Heart right ventricle (tissue), 16 donors: ENCODE measurements at regions of chr10 and their contacts with region 1.

Region 1: DNA sequence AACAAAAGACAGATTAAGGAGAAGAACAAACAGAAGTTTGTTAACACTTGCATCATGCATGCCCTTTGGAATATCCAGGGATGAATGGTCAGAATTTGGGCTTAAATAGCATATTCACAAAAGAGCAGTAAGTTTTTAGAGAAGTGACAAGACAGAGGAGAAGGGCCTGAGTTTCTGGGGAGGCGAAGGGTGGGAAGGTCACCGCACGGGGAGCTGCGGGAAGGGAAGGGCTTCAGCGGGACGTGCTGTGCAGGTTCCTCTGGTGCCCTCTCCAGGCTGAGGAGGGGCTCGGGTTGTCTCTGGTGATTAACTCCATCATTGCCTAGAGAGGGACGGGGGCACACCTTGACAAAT is 10.4 kb upstream of the ZNF22 start:
- DNase-seq: peak in 1 of 2 donors; percentile 42
- ATAC-seq: peak in 7 of 8 donors; percentile 33 to 66 (median 54)
- H3K4me3 ChIP-seq: no peak overlapping the region
- H3K27ac ChIP-seq: peak overlapping the region; percentile 8 to 99 (median 61)
- H3K4me1 ChIP-seq: peaks cover 30 to 86% (median 68%) of the 10 kb centered on the region in 9 donors
- H3K27me3 ChIP-seq: no peaks in the 10 kb centered on the region
- CTCF ChIP-seq: peak in 8 of 9 donors; percentile 36 to 65 (median 44)

Region 2: DNA sequence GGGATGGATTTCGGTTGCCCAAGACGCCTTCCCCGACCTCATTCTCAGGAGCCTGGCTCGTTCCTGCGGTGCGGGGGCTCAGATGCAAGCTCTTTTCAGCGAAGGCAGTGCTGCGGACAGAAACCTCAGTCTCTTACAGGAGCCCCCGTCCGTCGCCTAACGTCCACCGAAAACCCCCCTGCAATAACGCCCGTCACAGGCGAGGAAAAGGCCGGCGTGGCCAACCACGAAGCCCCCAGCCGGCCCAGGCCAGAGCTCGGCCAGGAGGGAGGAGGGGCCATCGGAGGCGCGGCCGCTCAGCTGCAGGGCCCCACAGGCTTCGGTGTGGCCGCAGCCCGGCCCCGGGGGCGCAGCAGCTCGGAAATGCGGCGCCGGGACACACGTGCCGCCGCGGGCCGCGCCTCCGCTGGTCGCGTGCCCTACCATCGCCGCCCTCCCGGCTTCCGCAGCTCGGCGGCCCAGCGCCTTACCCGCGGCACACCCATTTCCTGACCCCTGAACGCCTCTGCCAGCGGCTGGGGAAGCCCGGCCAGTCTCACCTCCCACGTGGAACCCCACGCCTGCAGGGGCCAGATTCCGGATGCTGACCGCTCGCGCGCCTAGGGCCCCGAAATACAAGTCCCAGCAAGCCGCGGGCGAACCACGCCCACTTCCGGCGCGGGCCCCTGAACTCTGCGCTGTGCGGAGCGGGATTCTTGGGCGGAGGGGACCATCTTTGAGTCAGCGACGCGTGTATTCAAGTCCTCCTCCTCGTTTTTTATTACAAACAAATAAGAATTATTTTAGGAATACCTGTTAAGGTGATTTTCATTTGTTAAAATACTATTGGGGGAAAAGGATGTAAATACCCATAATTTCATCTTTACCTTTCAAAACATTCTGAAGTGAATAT is 1416.0 kb before region 1 on chr10 and contains the start of gene ZNF239:
- intact Hi-C with region 1: no loop called
- DNase-seq: peak; percentile 91 to 92
- ATAC-seq: peak; percentile 95 to 99 (median 98)
- H3K4me3 ChIP-seq: peak within 1 kb of the TSS; percentile 7 to 74 (median 63)
- H3K27ac ChIP-seq: peak within 1 kb of the TSS in 9 of 10 donors; percentile 52 to 83 (median 60)
- H3K4me1 ChIP-seq: peaks cover 0 to 20% (median 14%) of the 10 kb centered on the region in 9 donors
- H3K27me3 ChIP-seq: no peaks in the 10 kb centered on the region
- CTCF ChIP-seq: peak in 1 of 9 donors; percentile 15
- total RNA-seq, gene ZNF239: 1.1 to 2.5 (median 1.6) TPM

Region 3: GRCh38 chr10:44878706-44879530 is 111.4 kb before region 1 on chr10:
- intact Hi-C with region 1: loop called in 1 of 10 experiments (anchors 10 kb)
- DNase-seq: peak; percentile 86 to 91
- ATAC-seq: peak; percentile 90 to 97 (median 95)
- H3K4me3 ChIP-seq: peak overlapping the region in 9 of 10 donors; percentile 35 to 61 (median 52)
- H3K27ac ChIP-seq: peak overlapping the region in 9 of 10 donors; percentile 11 to 72 (median 60)
- H3K4me1 ChIP-seq: peaks cover 0 to 34% (median 16%) of the 10 kb centered on the region in 9 donors
- H3K27me3 ChIP-seq: peaks cover 0 to 6% (median 0%) of the 10 kb centered on the region in 7 donors
- CTCF ChIP-seq: peak in 6 of 9 donors; percentile 10 to 39 (median 22)

Region 4: DNA sequence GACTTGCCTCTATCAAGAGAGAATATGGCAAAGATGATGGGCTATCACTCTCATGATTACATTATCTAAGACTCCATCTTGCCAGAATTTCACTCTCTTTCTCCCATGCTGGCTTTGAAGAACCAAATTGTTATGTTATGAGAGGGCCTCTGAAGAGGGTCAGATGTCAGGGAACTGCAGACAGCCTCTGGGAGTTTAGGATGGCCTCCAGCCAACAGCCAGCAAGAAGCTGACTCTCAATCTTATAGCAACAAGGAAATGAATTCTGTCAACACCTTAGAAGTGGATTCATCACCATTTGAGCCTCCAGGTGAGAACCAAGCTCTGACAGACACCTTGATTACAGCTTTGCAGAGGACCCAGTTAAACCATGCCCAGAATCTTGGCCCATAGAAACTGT is 44.0 kb after region 1 on chr10:
- intact Hi-C with region 1: no loop called
- DNase-seq: no peak
- ATAC-seq: no peak
- H3K4me3 ChIP-seq: no peak overlapping the region
- H3K27ac ChIP-seq: no peak overlapping the region
- H3K4me1 ChIP-seq: no peaks in the 10 kb centered on the region
- H3K27me3 ChIP-seq: no peaks in the 10 kb centered on the region
- CTCF ChIP-seq: no peak

Region 5: GRCh38 chr10:45058580-45058979 is 68.3 kb after region 1 on chr10:
- intact Hi-C with region 1: no loop called
- DNase-seq: no peak
- ATAC-seq: no peak
- H3K4me3 ChIP-seq: no peak overlapping the region
- H3K27ac ChIP-seq: no peak overlapping the region
- H3K4me1 ChIP-seq: peaks cover 0 to 15% (median 0%) of the 10 kb centered on the region in 9 donors
- H3K27me3 ChIP-seq: peaks cover 0 to 4% (median 0%) of the 10 kb centered on the region in 7 donors
- CTCF ChIP-seq: no peak

Region 6: DNA sequence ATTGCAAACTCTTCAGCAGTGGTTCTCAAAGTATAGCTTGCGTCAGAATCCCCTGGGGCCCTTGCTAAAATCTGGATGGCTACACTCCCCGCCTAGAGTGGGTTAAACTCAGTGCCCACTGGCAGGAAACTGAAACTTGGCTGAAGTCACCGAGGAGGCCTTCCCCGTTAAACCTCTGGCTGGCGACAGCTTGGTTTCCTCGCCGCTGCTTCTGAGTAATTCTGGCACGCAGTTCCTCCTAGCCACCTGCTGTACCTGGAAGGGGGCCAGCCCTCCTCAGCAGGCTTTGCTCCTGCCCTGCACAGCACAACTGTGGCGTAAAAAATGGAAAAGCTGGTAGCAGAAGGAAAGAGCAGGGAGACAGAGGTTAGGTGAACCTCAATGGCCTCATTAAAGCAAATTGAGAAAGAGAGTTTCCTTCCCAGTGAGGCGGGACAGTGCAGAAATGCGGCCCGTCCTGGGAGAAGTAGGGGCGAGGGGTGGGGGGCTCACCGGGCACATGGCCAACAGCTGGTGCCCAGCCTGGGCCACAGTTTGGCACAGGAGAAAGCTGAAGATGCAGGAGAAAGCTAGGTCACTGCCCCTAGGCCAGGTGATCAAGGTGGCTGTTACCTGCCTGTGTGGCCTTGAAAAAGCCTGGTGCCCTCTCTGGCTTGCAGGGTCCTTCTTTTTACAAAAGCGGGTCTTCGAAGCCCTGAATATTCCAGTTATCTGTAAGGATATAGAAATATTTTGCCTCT is 430.3 kb after region 1 on chr10:
- intact Hi-C with region 1: loop called in 1 of 10 experiments (anchors 10 kb)
- DNase-seq: peak; percentile 79 to 83
- ATAC-seq: peak; percentile 22 to 66 (median 56)
- H3K4me3 ChIP-seq: peak overlapping the region in 5 of 10 donors; percentile 63 to 79 (median 67)
- H3K27ac ChIP-seq: peak overlapping the region in 8 of 10 donors; percentile 91 to 99 (median 96)
- H3K4me1 ChIP-seq: peaks cover 0 to 68% (median 30%) of the 10 kb centered on the region in 9 donors
- H3K27me3 ChIP-seq: no peaks in the 10 kb centered on the region
- CTCF ChIP-seq: no peak